ENCODE measurements at regions of chr19 and their contacts with region 1.

Region 1: DNA sequence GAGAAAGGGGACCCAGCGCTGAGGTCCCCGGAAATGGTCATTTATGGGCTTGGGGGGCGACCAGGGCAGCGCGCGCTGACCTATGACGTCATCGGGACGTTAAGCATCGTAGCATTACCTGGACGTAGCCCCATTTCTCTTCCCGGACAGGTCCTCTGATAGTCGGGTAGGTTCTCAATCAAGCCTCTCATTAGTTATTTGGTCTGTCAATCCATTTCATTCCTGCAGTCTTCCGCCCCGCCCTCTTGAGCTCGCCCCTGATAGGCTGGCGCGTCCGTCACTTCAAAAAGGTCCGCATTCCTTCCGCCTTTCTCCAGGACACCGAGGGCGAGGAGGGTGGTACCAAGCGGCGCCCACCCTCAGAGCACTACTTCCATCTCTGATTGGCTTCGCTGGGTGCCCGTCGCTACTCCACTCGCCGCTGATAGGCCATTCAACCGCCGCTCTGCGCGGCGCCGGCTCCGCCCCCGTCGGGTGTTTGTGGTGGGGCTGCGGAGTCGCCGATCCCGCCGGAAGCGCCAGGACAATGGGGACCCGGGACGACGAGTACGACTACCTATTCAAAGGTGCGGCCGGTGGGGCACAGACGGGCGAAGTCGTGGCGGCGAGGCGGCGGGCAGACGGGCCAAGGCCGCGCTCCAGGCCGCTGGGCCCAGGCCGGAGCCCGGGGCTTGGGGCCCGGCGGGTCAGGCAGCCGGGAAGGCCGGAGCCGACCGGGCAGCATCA is at the start of gene RAB11B:
- DNase-seq: peak; percentile 92
- ATAC-seq: peak; percentile 88
- H3K4me3 Mint-ChIP-seq: peak within 1 kb of the TSS; percentile 95
- H3K27ac Mint-ChIP-seq: peak within 1 kb of the TSS; percentile 94
- H3K4me1 Mint-ChIP-seq: peaks cover 27% of the 10 kb centered on the region
- H3K27me3 Mint-ChIP-seq: no peaks in the 10 kb centered on the region
- CTCF ChIP-seq: no peak
- total RNA-seq, gene RAB11B: 92.1 and 100 TPM in 2 replicates

Region 2: GRCh38 chr19:8261347-8262310 is 128.4 kb before region 1 on chr19:
- CTCF ChIA-PET with region 1: no interaction called
- POLR2A ChIA-PET with region 1: no interaction called
- intact Hi-C with region 1: loop called (anchors 10 kb)
- DNase-seq: no peak
- ATAC-seq: no peak
- H3K4me3 Mint-ChIP-seq: no peak overlapping the region
- H3K27ac Mint-ChIP-seq: peak overlapping the region; percentile 24
- H3K4me1 Mint-ChIP-seq: no peaks in the 10 kb centered on the region
- H3K27me3 Mint-ChIP-seq: no peaks in the 10 kb centered on the region
- CTCF ChIP-seq: no peak

Region 3: GRCh38 chr19:8342684-8343482 is 47.2 kb before region 1 on chr19 and contains the start of gene KANK3:
- CTCF ChIA-PET with region 1: no interaction called
- POLR2A ChIA-PET with region 1: interaction called, 6 read pairs
- intact Hi-C with region 1: loop called (anchors 5 kb)
- DNase-seq: peak; percentile 74
- ATAC-seq: peak; percentile 100
- H3K4me3 Mint-ChIP-seq: peak within 1 kb of the TSS; percentile 75
- H3K27ac Mint-ChIP-seq: no peak within 1 kb of the TSS
- H3K4me1 Mint-ChIP-seq: peaks cover 6% of the 10 kb centered on the region
- H3K27me3 Mint-ChIP-seq: peaks cover 21% of the 10 kb centered on the region
- CTCF ChIP-seq: no peak
- total RNA-seq, gene KANK3: 0.07 and 0.29 TPM in 2 replicates

Region 4: DNA sequence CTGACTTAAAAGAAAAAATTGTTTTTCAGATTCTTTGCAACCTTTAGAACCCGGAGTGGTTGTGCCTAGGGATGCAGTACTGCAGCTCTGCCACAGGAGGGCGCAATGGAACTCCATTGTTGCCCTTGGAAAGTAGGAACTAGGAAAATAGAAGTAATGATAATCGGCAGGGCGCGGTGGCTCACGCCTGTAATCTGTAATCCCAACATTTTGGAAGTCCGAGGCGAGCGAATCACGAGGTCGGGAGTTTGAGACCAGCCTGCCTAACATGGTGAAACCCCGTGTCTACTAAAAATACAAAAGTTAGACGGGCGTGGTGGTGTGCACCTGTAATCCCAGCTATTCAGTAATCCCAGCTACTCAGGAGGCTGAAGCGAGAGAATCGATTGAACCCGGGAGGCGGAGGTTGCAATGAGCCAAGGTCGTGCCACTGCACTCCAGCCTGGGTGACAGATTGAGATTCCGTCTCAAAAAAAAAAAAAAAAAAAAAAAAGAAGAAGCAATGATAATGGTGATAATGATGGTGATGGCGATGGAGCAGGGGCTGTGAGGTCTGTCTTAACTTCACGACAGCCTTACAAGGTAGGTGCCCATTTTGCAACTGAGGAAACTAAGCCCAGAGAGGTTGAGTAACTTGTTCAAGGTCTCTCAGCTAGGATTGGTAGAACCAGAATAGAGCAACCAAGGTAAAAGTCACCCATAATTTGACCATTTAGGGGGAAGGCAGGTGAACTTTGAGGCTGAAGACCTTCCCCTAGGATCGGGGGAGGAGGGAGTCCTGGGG is 226.0 kb after region 1 on chr19:
- CTCF ChIA-PET with region 1: no interaction called
- POLR2A ChIA-PET with region 1: no interaction called
- intact Hi-C with region 1: no loop called
- DNase-seq: no peak
- ATAC-seq: peak; percentile 42
- H3K4me3 Mint-ChIP-seq: no peak overlapping the region
- H3K27ac Mint-ChIP-seq: no peak overlapping the region
- H3K4me1 Mint-ChIP-seq: peaks cover 4% of the 10 kb centered on the region
- H3K27me3 Mint-ChIP-seq: peaks cover 13% of the 10 kb centered on the region
- CTCF ChIP-seq: no peak